ACHN (cell line): ENCODE measurements at regions of chr15 and their contacts with region 1.

Region 1: GRCh38 chr15:92808978-92809879 is 90.9 kb upstream of the CHD2 start:
- DNase-seq: peak; percentile 94

Region 2: DNA sequence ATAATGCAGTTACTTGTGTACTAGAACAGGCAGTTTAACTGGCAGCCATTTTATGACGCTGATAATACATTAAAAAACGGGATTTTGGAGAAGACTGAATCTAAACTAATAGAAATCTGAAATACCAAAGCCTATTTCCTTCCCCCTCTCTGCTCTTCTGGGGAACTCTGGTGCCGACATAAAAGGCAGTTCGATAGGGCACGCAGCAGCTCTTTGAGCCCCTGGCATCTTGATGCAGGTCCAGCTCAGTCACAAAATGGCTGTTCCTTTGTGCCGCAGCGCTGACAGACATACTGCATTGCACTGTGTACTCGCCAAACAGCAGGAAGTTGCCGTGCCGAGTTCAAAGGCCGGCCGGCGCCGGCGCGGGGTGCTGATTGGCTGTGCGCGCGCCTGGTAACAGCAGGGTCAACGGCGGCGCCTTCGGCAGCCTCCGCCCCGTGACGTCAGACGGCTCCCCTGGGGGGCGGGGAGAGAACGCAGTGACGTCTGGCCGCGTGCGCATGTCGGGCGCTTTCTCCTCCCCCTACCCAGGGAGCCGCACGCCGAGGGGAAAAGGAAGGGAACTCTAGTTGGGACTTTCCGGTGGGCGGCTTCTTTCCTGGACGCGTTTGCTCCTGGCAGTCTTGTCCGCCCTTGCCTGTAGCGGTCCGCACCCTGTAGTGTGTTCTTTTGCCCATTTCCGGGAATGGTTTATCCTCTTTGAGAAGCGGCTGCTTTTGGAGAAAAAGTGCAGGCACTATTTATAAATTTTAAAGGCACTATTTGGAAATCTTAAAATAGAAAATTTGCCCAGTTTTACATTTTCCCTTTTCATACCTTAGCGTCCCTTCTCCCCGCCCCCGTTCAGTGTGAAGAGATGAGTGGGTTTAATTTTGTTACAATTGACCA is 95.0 kb after region 1 on chr15:
- in situ Hi-C with region 1: loop called (anchors 25 kb)
- DNase-seq: peak; percentile 96

Region 3: GRCh38 chr15:92958105-92958504 is 148.9 kb after region 1 on chr15:
- in situ Hi-C with region 1: no loop called
- DNase-seq: no peak

Region 4: DNA sequence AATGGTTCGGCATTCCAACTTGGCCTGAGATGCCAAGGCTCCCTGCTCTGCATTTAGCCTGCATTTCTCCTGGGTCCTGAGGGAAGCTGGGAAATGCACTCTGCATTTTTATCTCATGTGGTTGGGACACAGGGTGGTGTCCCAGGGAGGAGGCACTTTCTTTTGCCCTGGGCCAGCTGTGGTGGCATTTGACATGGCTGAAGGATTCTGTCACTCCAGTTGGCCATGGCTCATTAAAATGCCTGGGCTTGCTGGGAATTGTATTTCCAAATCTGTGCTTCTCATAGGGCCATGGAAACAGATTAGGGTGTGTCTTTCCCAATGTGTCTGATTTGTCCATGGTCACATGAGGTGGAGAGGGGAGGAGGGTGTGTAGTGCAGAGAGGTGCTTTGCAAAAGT is 408.1 kb after region 1 on chr15:
- in situ Hi-C with region 1: no loop called
- DNase-seq: no peak